ENCODE measurements at regions of chr7 and their contacts with region 1.

Region 1: DNA sequence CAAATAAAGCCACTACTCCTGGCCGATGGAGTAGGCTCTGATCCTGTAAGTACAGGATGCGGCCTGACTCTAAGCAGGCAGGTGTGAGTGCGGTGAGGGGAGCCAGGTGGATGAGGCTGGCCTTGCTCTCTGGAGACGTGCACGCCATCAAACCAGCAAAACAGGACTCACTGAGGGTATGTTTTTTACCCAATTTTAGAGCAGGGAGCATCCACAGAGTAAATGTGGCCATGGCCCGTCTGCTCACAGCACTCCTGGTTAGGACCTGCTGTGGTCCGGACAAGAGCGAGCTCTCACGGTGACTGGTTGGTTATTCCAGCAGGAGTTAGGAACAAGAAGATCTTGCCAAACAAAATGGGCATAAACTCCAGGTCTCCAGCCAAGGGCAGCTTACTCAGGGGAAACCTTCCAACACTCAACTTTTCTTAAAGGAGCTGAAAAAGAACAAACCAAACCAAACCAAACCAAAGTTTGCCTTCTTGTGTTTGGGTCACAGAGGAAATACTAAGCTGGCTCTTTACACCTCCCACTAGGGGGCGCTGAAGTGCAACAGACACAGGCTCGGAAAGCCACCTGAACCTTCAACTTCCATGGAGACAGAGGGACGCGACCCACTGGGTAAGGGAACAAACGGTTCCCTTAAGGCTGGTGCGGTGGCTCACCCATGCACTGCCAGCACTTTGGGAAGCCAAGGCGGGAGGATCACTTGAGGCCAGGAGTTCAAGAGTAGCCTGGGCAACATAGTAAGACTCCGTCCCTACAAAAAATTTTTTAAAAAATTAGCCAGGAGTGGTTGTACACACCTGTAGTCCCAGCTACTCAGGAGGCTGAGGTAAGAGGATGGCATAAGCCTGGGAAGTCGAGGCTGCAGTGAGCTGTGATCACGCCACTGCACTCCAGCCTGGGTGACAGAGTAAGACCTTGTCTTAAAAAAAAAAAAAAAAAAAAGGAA is 122.4 kb downstream of the CLEC2L start:
- DNase-seq: peak; percentile 64 to 90 (median 82)
- ATAC-seq: peak; percentile 48 to 70
- H3K4me3 Mint-ChIP-seq: peak overlapping the region in 5 of 10 donors; percentile 30 to 77 (median 57)
- H3K27ac Mint-ChIP-seq: peak overlapping the region in 9 of 10 donors; percentile 20 to 94 (median 69)
- H3K4me1 Mint-ChIP-seq: peaks cover 41 to 81% (median 75%) of the 10 kb centered on the region in 4 donors
- H3K27me3 Mint-ChIP-seq: no peaks in the 10 kb centered on the region

Region 2: DNA sequence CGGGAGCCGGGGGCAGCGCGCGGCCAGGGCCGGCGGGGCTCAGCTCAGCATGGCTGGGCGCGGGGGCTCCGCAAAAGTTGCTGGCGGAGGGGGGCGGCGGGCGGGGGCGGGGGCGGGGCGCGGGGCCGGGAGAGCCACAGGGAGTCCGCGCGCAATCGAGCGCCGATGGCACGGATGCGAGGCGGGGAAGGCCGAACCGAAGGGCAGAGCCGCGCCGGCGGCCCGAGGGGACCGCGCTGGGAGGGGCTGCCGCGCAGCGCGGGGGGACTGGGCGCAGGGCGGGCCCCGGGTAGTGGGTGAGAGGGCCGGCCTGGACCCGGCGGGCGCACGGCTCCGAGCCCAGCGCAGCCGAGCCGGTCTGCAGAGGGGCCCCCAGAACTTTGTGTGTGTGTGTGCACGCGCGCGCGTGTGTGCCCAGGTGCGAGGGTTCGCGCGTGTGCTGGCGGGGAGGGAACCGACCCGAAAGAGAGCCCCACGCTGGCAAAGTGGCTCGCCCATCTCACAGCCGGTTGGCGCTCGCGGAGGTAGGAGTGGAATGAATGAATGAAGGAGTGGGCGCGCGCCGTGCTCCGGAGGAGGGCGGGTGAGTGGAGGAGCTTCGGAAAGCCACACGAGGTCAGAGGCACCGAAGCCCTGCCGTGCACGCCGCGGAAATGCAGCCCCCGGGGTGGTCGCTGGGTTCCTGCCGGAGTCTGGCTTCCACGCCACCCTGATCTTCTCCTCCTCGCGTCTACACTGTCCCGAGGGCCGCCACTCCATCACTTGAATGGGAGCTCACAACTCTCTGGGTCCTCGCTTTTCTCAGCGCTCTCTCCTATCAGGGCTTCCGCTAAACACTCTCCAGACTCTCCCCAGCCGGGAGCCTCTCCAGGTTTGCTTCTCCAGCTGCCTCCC is 132.3 kb after region 1 on chr7 and contains the start of gene HIPK2:
- POLR2A ChIA-PET with region 1: interaction called, 11 read pairs
- DNase-seq: peak; percentile 60 to 80 (median 70)
- ATAC-seq: peak; percentile 65 to 68
- H3K4me3 Mint-ChIP-seq: peak within 1 kb of the TSS; percentile 94 to 99 (median 98)
- H3K27ac Mint-ChIP-seq: peak within 1 kb of the TSS; percentile 93 to 99 (median 96)
- H3K4me1 Mint-ChIP-seq: peaks cover 34 to 53% (median 41%) of the 10 kb centered on the region in 4 donors
- H3K27me3 Mint-ChIP-seq: peaks cover 2 to 22% (median 13%) of the 10 kb centered on the region in 5 donors
- polyA plus RNA-seq, gene HIPK2: 2.1 to 4.3 (median 3.1) TPM

Measured in naive thymus-derived CD8-positive, alpha-beta T cell (primary cell).